Mammary epithelial cell (primary cell): ENCODE measurements at regions of chr13 and their contacts with region 1.

Region 1: DNA sequence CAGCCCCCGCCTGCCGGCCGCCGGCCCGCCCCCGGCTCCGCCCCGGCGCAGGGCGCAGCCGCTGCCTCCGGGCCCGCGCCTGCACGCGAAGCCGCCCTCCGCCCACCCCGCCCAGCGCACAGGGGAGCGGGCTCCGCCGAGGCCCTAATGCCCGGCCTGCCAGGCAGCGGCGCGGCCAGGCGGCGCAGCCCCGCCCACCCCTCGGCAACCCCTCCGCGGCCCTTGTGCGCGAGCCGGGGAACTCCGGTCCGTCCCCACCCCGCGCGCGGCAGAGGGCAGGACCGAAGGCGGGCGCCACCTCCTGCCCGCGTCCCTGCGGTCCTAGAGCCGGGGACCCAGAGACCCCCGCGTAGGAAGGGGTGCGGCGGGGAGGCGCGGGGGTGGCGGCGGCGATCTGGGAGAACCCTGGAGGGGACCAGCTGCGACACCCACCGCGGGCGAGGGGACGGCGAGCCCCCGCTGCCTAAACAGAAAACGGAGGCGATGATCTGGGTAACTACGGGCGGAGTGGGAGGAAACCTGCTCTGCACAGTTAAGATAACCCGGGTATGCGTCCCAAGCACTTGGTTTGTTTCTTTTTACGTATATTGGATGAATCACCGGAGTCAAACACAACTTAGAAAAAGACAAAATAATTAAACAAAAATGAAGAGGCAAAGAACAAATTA is 350 bp upstream of the USP12 start:
- DNase-seq: peak; percentile 88
- H3K4me3 ChIP-seq: peak overlapping the region; percentile 61 to 76 (median 74)
- H3K27ac ChIP-seq: peak overlapping the region; percentile 54
- H3K4me1 ChIP-seq: peaks cover 15% of the 10 kb centered on the region
- H3K27me3 ChIP-seq: no peaks in the 10 kb centered on the region
- CTCF ChIP-seq: peak in 1 of 2 donors; percentile 22

Region 2: GRCh38 chr13:26442541-26442940 is 729.4 kb before region 1 on chr13:
- CTCF ChIA-PET with region 1: no interaction called
- dilution Hi-C with region 1: no loop called
- in situ Hi-C with region 1: no loop called
- intact Hi-C with region 1: no loop called
- DNase-seq: no peak
- H3K4me3 ChIP-seq: no peak overlapping the region
- H3K27ac ChIP-seq: no peak overlapping the region
- H3K4me1 ChIP-seq: no peaks in the 10 kb centered on the region
- H3K27me3 ChIP-seq: no peaks in the 10 kb centered on the region
- CTCF ChIP-seq: no peak

Region 3: DNA sequence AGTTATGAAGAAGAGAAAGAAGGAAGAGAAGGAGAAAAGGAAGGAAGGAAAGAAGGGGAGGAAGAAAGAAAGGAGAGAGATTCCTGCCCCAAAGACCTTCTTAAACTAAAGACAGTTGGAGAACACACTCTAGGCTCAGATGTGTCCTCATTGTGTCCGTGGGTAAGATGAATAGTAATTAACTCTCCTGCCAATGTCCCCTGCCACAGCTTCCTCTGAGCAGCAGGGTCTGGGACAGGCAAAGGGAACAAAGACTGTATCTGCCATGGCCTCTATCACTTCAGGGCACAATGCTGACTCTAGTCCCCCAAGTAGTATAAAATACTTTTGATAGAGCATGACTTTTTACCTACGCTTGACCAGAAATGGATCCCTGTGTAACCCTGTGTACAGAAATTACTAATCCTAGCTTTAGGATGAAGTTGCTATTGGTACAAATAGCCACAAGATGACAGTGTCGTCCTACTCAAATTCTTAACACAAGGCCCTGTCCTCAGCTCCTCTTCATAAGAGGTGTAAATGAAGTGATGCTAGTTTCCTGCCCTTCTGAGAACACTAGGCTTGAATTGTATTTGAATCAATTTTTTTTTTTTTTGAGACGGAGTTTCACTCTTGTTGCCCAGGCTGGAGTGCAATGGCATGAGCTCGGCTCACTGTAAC is 225.1 kb before region 1 on chr13:
- CTCF ChIA-PET with region 1: interaction called, 12 read pairs
- dilution Hi-C with region 1: no loop called
- in situ Hi-C with region 1: no loop called
- intact Hi-C with region 1: no loop called
- DNase-seq: peak; percentile 29
- H3K4me3 ChIP-seq: no peak overlapping the region
- H3K27ac ChIP-seq: no peak overlapping the region
- H3K4me1 ChIP-seq: no peaks in the 10 kb centered on the region
- H3K27me3 ChIP-seq: no peaks in the 10 kb centered on the region
- CTCF ChIP-seq: peak; percentile 78 to 86

Region 4: DNA sequence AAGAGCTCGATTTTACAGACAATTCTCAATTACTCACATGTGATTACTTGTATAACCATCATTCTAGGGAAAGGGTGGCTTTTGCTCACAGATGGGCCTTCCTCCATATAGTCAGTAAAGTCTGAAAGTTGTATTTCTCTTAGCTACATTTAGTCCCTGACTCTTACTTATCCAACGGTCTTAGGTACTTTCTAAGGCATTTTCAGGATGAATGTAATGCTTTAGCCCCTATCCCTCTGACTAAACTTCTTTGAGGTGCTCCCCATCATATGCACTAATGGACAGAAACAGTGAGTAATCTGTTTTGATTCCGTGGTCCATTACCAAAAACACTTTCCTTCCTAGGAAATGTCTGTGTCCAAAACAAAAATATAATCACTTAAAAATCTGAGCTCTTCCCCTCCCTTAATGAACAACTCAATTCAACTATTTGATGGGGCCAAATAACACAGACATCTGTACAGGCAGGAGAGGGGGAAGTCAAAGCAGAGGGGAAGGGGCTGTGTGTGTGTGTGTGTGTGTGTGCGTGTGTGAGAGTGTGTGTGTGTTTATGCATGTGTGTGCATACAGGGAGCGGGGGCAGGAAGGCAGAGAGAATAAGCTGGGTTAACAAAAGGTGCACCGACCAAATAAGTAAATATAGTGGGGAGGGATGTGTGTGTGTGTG is 85.2 kb before region 1 on chr13:
- CTCF ChIA-PET with region 1: no interaction called
- dilution Hi-C with region 1: no loop called
- in situ Hi-C with region 1: no loop called
- intact Hi-C with region 1: no loop called
- DNase-seq: no peak
- H3K4me3 ChIP-seq: no peak overlapping the region
- H3K27ac ChIP-seq: no peak overlapping the region
- H3K4me1 ChIP-seq: no peaks in the 10 kb centered on the region
- H3K27me3 ChIP-seq: no peaks in the 10 kb centered on the region
- CTCF ChIP-seq: no peak

Region 5: DNA sequence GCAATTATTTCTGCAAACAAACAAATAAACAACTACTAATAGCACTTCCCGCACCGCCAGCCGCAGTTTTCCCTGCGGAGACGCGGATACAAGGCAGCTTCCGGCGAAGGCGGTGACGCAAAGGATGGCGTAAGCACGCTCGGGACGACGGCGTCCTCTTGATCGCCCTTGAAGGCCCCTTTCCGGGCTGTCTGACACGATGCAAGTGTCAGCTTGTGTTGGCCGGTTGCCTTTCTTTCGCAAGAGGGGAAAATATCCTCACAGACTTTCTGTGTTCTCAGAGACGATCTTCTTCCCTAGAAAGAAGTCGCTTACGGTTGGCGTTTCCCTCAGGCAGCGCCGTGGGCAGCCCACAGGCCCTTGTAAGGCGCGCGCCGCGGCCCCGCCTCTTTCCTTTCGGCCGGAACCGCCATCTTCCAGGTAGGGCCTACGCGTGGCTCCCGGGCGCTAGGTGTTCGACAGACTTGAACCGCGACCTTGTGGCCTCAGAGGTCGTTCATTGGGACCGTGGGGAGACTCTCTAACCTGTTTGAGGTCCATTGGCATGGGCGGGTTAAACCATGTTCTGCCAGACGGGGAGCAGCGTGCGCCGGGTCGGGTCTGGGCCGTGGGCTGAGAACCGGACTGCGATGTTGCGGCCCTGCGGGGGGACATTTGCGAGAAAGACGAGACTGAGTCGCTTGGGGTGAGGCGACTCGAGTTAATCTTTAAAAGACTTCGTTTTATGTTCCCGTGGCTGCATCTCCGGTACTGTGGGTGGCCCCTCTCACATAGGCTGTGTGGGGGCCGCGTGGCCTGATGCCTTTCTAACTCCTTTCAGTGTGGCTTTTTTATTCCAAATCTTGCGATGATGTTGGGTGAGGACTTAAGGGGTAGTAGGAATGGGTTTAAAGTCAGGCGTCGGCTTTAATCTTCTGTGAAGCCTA is 79.5 kb after region 1 on chr13 and contains the start of gene RPL21:
- CTCF ChIA-PET with region 1: no interaction called
- dilution Hi-C with region 1: no loop called
- in situ Hi-C with region 1: no loop called
- intact Hi-C with region 1: loop called (anchors 1 kb)
- DNase-seq: peak; percentile 88
- H3K4me3 ChIP-seq: peak within 1 kb of the TSS; percentile 77 to 97 (median 84)
- H3K27ac ChIP-seq: peak within 1 kb of the TSS; percentile 94
- H3K4me1 ChIP-seq: peaks cover 9% of the 10 kb centered on the region
- H3K27me3 ChIP-seq: no peaks in the 10 kb centered on the region
- CTCF ChIP-seq: no peak
- total RNA-seq, gene RPL21: 422 to 818 TPM

Region 6: DNA sequence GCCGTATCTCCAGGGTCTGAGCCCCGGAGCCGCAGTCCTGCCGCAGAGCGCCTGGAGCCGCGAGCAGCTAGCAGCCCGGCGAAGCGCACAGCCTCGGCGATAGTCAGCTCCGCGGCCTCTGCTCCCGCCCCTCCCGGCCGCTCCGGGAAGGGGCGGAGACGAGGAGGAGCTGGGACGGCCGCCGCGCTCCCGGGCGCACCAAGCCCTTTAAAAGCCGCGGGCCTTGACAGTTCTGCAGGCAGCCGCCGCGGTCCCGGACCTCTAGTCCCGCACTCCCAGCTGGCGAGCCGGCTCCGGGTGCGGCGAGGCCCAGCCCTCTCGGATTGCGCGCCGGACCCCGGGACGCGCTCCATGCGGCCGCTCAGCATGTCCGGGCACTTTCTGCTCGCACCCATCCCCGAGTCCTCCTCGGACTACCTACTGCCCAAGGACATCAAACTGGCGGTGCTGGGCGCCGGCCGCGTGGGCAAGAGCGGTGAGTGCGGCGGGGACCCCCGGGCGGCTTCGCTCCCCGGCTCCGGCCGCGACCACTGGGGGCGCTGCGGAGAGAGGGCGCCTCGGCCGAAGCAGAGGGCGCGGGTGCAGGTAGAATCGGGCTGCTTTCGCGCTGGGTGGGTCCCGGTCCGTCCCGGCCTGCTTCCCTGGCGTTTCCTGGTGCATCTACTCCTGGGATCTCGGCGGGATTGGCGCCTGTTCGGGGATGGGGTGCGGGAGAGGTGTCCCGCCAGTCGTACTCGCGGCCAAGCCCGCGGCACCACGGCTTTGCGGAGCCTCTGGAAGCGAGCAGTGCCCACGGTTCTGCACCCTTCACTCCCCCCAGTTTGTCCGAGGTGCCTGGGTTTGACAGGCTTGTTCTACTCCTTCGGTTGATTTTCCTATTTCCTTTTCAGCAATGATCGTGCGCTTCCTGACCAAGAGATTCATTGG is 98.9 kb after region 1 on chr13 and contains the start of gene RASL11A:
- CTCF ChIA-PET with region 1: no interaction called
- dilution Hi-C with region 1: no loop called
- in situ Hi-C with region 1: no loop called
- intact Hi-C with region 1: loop called (anchors 5 kb)
- DNase-seq: peak; percentile 83
- H3K4me3 ChIP-seq: peak within 1 kb of the TSS; percentile 62 to 73 (median 69)
- H3K27ac ChIP-seq: no peak within 1 kb of the TSS
- H3K4me1 ChIP-seq: peaks cover 7% of the 10 kb centered on the region
- H3K27me3 ChIP-seq: no peaks in the 10 kb centered on the region
- CTCF ChIP-seq: peak; percentile 55 to 77
- total RNA-seq, gene RASL11A: 1.6 to 2.2 TPM